Activated naive CD4-positive, alpha-beta T cell treated with anti-CD3 and anti-CD28 coated beads for 36 hours (primary cell): ENCODE measurements at regions of chr11 and their contacts with region 1.

Region 1: GRCh38 chr11:121534131-121535093 is 81.6 kb upstream of the SORL1-AS1 start:
- DNase-seq: no peak
- H3K4me3 Mint-ChIP-seq: no peak overlapping the region
- H3K27ac Mint-ChIP-seq: no peak overlapping the region
- H3K4me1 Mint-ChIP-seq: peaks cover 60% of the 10 kb centered on the region
- H3K27me3 Mint-ChIP-seq: no peaks in the 10 kb centered on the region

Region 2: GRCh38 chr11:121482231-121483129 is 51.9 kb before region 1 on chr11:
- CTCF ChIA-PET with region 1: no interaction called
- intact Hi-C with region 1: loop called (anchors 2 kb)
- DNase-seq: peak; percentile 80
- H3K4me3 Mint-ChIP-seq: peak overlapping the region; percentile 88
- H3K27ac Mint-ChIP-seq: peak overlapping the region; percentile 98
- H3K4me1 Mint-ChIP-seq: peaks cover 39% of the 10 kb centered on the region
- H3K27me3 Mint-ChIP-seq: no peaks in the 10 kb centered on the region

Region 3: GRCh38 chr11:121581607-121582006 is 47.2 kb after region 1 on chr11:
- CTCF ChIA-PET with region 1: no interaction called
- intact Hi-C with region 1: loop called (anchors 2 kb)
- DNase-seq: peak; percentile 29
- H3K4me3 Mint-ChIP-seq: no peak overlapping the region
- H3K27ac Mint-ChIP-seq: peak overlapping the region; percentile 74
- H3K4me1 Mint-ChIP-seq: peaks cover 27% of the 10 kb centered on the region
- H3K27me3 Mint-ChIP-seq: no peaks in the 10 kb centered on the region